Activated CD8-positive, alpha-beta memory T cell treated with anti-CD3 and anti-CD28 coated beads, Interleukin-2, amount 10 ng/mL, durations not matched to agents 7 days and 5 days (primary cell): ENCODE measurements at regions of chr11 and their contacts with region 1.

Region 1: DNA sequence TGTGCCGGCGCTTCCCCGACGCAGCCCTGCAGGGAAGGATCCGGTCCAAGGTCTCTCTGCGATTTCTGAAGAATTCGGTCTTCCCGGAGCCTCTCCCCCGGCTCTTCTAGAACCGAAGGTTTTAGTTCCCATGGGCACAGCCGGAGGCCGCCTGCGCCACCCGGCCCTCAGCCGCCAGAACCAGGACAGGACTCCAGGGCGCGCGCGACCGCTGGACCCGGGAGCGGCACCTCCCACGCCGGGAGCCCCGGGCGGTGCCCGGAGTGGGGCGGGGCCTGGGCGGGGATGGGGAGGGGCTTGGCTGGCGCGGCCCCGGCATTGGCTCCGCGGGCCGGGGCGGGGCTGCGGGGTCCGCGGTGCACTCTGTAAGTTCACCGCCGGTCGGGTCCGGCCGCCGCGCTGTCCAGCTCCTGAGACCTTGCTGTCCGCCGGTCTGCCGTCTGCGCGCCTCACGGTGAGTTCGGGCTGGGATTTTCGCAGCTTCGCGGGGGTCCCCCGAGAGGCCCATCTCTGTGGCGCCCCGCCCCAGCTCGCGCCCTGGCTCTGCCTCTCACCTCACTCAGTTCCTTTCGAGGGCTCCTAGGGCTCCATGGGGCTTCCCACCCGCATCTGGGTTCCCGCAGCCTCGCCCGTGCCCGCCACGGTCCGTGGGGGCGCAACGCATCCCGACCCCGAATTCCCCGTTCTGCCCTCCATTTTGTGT is at the start of gene CDC42EP2:
- DNase-seq: peak; percentile 79
- ATAC-seq: peak; percentile 96
- H3K4me3 Mint-ChIP-seq: peak within 1 kb of the TSS; percentile 70
- H3K27ac Mint-ChIP-seq: no peak within 1 kb of the TSS
- H3K4me1 Mint-ChIP-seq: peaks cover 6% of the 10 kb centered on the region
- H3K27me3 Mint-ChIP-seq: peaks cover 12% of the 10 kb centered on the region
- total RNA-seq, gene CDC42EP2: 1.4 TPM in 1 of 2 experiments, not detected in the other

Region 2: DNA sequence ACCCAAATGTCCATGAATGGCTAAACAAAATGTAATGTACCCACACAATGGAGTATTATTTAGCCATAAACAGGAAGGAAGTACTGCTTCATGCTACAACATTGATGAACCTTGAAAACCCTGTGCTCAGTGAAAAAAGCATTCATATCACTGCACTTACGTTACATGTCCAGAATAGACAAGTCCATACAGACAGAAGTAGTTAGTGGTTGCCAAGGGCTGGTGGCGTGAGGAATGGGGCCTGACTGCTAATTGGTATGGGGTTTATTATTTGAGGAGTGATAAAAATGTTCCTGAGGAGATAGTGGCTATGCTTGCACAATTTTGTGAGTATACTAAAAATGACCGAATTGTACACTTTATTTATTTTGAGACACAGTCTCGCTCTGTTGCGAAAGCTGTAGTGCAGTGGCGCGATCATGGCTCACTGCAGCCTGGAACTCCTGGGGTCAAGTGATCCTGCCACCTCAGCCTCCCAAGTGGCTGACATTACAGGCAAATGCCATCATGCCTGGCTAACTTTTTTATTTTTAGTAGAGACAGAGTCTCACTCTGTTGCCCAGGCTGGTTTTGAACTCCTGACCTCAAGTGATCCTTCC is 172.7 kb before region 1 on chr11:
- CTCF ChIA-PET with region 1: no interaction called
- DNase-seq: no peak
- ATAC-seq: no peak
- H3K4me3 Mint-ChIP-seq: no peak overlapping the region
- H3K27ac Mint-ChIP-seq: no peak overlapping the region
- H3K4me1 Mint-ChIP-seq: no peaks in the 10 kb centered on the region
- H3K27me3 Mint-ChIP-seq: peaks cover 25% of the 10 kb centered on the region

Region 3: GRCh38 chr11:65180877-65181568 is 133.6 kb before region 1 on chr11:
- CTCF ChIA-PET with region 1: interaction called, 14 read pairs
- DNase-seq: peak; percentile 72
- ATAC-seq: peak; percentile 79
- H3K4me3 Mint-ChIP-seq: peak overlapping the region; percentile 78
- H3K27ac Mint-ChIP-seq: peak overlapping the region; percentile 68
- H3K4me1 Mint-ChIP-seq: peaks cover 19% of the 10 kb centered on the region
- H3K27me3 Mint-ChIP-seq: no peaks in the 10 kb centered on the region

Region 4: GRCh38 chr11:65225279-65226102 is 89.2 kb before region 1 on chr11:
- CTCF ChIA-PET with region 1: interaction called, 77 read pairs
- DNase-seq: peak; percentile 72
- ATAC-seq: peak; percentile 90
- H3K4me3 Mint-ChIP-seq: peak overlapping the region; percentile 70
- H3K27ac Mint-ChIP-seq: no peak overlapping the region
- H3K4me1 Mint-ChIP-seq: peaks cover 19% of the 10 kb centered on the region
- H3K27me3 Mint-ChIP-seq: peaks cover 17% of the 10 kb centered on the region

Region 5: GRCh38 chr11:65274735-65275682 is 39.6 kb before region 1 on chr11:
- CTCF ChIA-PET with region 1: interaction called, 50 read pairs
- DNase-seq: peak; percentile 49
- ATAC-seq: peak; percentile 63
- H3K4me3 Mint-ChIP-seq: no peak overlapping the region
- H3K27ac Mint-ChIP-seq: no peak overlapping the region
- H3K4me1 Mint-ChIP-seq: peaks cover 20% of the 10 kb centered on the region
- H3K27me3 Mint-ChIP-seq: no peaks in the 10 kb centered on the region

Region 6: GRCh38 chr11:65301491-65302329 is 12.9 kb before region 1 on chr11:
- CTCF ChIA-PET with region 1: interaction called, 17 read pairs
- DNase-seq: no peak
- ATAC-seq: no peak
- H3K4me3 Mint-ChIP-seq: no peak overlapping the region
- H3K27ac Mint-ChIP-seq: no peak overlapping the region
- H3K4me1 Mint-ChIP-seq: no peaks in the 10 kb centered on the region
- H3K27me3 Mint-ChIP-seq: no peaks in the 10 kb centered on the region